GM10248 (cell line): ENCODE measurements at regions of chr13 and their contacts with region 1.

Region 1: DNA sequence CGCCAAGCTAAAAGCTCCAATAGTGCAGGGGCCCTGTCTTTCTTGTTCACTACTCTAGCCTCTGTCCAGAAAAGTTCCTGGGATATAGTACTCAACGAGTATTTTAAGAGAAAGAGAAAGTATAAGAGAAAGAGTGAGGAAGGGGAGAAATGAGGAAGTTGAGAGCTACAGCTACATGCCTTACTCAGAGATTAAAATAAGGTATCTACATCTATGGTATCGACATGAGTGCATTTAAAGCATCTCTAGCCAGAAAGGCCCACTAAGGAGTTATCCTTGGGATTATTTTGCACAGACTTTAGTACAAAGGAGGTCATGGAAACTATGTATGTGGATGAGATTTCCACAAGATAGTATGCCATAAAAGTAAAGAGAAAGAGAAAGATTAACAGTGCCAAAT is 28.5 kb downstream of the MYCBP2 start:
- DNase-seq: peak; percentile 38
- CTCF ChIP-seq: no peak

Region 2: DNA sequence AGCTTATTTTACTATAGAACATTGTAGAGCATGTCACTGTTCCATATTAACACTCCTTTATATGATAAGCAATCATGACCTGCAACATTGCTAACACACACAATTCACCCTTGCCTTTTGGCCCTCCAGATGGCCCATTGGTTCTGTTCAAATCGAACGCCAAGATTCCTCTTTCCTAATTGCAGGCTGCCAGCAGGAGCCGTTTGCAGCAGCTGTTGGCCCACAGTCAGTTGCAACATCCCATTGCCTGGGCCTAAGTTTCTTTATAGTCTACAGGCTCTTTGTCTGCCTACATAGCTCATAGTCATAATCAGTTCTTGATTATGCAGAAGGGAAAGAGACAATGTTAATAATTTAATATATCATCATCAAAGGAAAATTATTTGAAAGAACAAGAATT is 449.8 kb before region 1 on chr13:
- CTCF ChIA-PET with region 1: no interaction called
- POLR2A ChIA-PET with region 1: no interaction called
- DNase-seq: no peak
- CTCF ChIP-seq: no peak

Region 3: GRCh38 chr13:77310579-77311279 is 12.3 kb after region 1 on chr13:
- CTCF ChIA-PET with region 1: interaction called, 32 read pairs
- POLR2A ChIA-PET with region 1: no interaction called
- DNase-seq: no peak
- CTCF ChIP-seq: no peak